ENCODE measurements at regions of chr11 and their contacts with region 1.

Region 1: DNA sequence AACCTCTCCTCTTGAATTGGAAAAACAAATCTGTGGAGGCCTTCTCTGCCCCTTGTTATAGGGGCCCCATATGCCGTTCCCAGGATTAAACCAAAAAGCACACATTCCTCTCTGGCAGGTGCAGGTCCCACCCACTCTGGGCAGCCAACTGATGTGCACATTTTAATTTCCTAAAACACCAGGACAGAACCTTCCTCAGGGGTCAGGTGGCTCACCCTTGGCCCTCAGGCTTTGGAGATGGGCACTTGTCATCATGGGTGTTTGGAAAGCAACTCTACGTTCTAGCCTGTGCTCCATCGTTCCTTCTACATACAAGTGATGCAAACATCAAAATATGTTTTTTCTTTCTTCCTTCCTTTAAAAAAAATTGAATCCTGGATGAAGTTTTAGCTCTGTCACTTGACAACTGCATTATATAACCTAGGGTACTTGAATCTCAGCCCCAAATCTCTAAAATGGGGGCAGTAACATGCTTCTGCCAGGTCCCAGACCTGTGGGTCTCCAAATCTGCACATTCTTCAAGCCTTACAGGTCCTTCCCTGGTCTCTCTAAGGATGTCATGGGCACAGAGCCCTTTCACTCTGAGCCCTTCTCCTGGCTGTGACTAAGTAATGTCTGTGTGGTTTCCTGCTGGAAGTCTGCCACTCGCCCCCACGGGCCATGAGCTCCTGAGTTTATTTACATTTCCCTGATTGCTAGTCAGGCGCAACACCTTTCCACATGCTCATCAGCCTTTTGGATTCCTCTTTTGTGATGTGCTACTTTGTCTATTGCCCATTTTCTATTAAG is 43.8 kb downstream of the KCNQ1OT1 start:
- DNase-seq: peak; percentile 15
- ATAC-seq: no peak
- H3K4me3 Mint-ChIP-seq: no peak overlapping the region
- H3K27ac Mint-ChIP-seq: no peak overlapping the region
- H3K4me1 Mint-ChIP-seq: peaks cover 3% of the 10 kb centered on the region
- H3K27me3 Mint-ChIP-seq: no peaks in the 10 kb centered on the region
- CTCF ChIP-seq: no peak

Region 2: DNA sequence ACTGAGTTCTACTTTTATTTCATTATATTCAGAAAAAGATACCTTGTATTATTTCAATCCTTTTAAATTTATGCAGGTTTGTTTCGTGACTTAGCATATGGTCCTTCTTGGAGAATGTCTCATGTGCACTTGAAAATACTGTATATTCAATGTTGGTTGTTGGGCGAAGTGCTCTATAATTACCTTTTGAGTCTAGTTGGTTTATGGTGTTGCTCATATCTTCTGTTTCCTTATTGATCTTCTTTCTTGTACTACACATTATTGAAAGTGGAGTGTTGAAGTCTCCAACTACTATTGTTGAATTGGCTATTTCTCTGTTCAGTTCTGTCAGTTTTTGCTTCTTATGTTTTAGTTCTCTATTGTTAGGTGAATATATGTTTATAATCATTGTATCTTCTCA is 46.7 kb before region 1 on chr11:
- CTCF ChIA-PET with region 1: no interaction called
- POLR2A ChIA-PET with region 1: no interaction called
- intact Hi-C with region 1: loop called (anchors 5 kb)
- DNase-seq: no peak
- ATAC-seq: no peak
- H3K4me3 Mint-ChIP-seq: no peak overlapping the region
- H3K27ac Mint-ChIP-seq: no peak overlapping the region
- H3K4me1 Mint-ChIP-seq: no peaks in the 10 kb centered on the region
- H3K27me3 Mint-ChIP-seq: no peaks in the 10 kb centered on the region
- CTCF ChIP-seq: no peak

Region 3: DNA sequence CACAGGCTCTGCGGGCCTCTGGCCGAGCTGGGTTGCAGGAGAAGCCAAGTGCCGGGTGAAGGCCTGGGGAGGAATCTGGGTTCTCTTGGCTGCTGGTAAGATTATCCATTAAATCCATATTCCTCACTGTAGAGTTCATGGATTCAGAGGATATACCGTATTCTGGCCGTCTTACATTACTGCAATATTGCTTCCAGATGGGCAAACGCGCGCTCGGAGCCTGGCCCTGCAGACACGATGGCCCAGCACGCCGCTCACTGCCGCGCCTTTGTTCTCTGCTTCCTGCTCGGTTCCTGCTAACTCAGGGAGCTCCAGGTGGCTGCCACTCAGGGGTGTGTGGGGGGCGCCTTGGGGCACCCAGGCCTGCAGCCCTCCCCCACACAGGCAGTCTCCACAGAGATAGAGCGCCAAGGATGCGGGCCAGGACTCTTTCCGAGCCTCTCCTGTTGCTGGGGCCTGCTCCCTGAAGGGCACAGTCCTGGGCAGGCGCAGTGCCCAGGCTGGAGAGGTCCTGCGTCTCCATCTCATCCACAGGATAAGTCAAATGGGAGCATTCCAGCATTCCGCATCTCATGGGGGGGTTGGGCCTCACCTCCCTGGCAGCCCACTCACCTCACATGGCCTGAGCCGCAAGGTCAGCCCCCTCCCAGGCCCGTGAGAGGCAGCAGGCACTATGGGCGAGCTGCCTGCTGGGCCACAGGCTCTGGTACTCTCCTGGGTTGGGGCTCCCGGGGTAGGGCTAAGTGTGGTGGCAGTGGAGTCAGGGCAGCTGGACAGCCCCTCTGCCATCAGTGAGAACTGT is 57.8 kb after region 1 on chr11:
- CTCF ChIA-PET with region 1: no interaction called
- POLR2A ChIA-PET with region 1: no interaction called
- intact Hi-C with region 1: no loop called
- DNase-seq: no peak
- ATAC-seq: no peak
- H3K4me3 Mint-ChIP-seq: no peak overlapping the region
- H3K27ac Mint-ChIP-seq: no peak overlapping the region
- H3K4me1 Mint-ChIP-seq: no peaks in the 10 kb centered on the region
- H3K27me3 Mint-ChIP-seq: no peaks in the 10 kb centered on the region
- CTCF ChIP-seq: no peak

Measured in activated CD8-positive, alpha-beta T cell treated with anti-CD3 and anti-CD28 coated beads for 36 hours (primary cell).